ENCODE measurements at regions of chr9 and their contacts with region 1.

Region 1: GRCh38 chr9:13427587-13427986 is 148.1 kb upstream of the MPDZ start:
- DNase-seq: peak; percentile 14
- ATAC-seq: no peak
- H3K4me3 ChIP-seq: no peak overlapping the region
- H3K27ac ChIP-seq: no peak overlapping the region
- H3K4me1 ChIP-seq: no peaks in the 10 kb centered on the region
- H3K27me3 ChIP-seq: no peaks in the 10 kb centered on the region
- CTCF ChIP-seq: peak; percentile 49
- EP300 ChIP-seq: no peak
- POLR2A ChIP-seq: no peak
- RAD21 ChIP-seq: no peak

Region 2: GRCh38 chr9:13491493-13492424 is 64.2 kb after region 1 on chr9:
- CTCF ChIA-PET with region 1: no interaction called
- POLR2A ChIA-PET with region 1: no interaction called
- in situ Hi-C with region 1: no loop called
- intact Hi-C with region 1: no loop called
- DNase-seq: no peak
- ATAC-seq: no peak
- H3K4me3 ChIP-seq: no peak overlapping the region
- H3K27ac ChIP-seq: no peak overlapping the region
- H3K4me1 ChIP-seq: no peaks in the 10 kb centered on the region
- H3K27me3 ChIP-seq: no peaks in the 10 kb centered on the region
- CTCF ChIP-seq: no peak
- EP300 ChIP-seq: no peak
- POLR2A ChIP-seq: no peak
- RAD21 ChIP-seq: no peak

Region 3: GRCh38 chr9:14133394-14133793 is 705.8 kb after region 1 on chr9:
- CTCF ChIA-PET with region 1: no interaction called
- POLR2A ChIA-PET with region 1: no interaction called
- in situ Hi-C with region 1: no loop called
- intact Hi-C with region 1: no loop called
- DNase-seq: no peak
- ATAC-seq: no peak
- H3K4me3 ChIP-seq: no peak overlapping the region
- H3K27ac ChIP-seq: no peak overlapping the region
- H3K4me1 ChIP-seq: no peaks in the 10 kb centered on the region
- H3K27me3 ChIP-seq: no peaks in the 10 kb centered on the region
- CTCF ChIP-seq: no peak
- EP300 ChIP-seq: no peak
- POLR2A ChIP-seq: no peak
- RAD21 ChIP-seq: no peak

Region 4: GRCh38 chr9:14428781-14429230 is 1001.2 kb after region 1 on chr9:
- CTCF ChIA-PET with region 1: interaction called, 3 read pairs
- POLR2A ChIA-PET with region 1: no interaction called
- in situ Hi-C with region 1: loop called (anchors 10 kb)
- intact Hi-C with region 1: loop called (anchors 1 kb)
- DNase-seq: peak; percentile 25
- ATAC-seq: peak; percentile 94
- H3K4me3 ChIP-seq: no peak overlapping the region
- H3K27ac ChIP-seq: no peak overlapping the region
- H3K4me1 ChIP-seq: no peaks in the 10 kb centered on the region
- H3K27me3 ChIP-seq: peaks cover 0 to 2% of the 10 kb centered on the region in 2 experiments; a peak in 1 of 5 replicates
- CTCF ChIP-seq: peak; percentile 70
- EP300 ChIP-seq: no peak
- POLR2A ChIP-seq: no peak
- RAD21 ChIP-seq: no peak

Measured in HepG2 (cell line).